Activated B cell treated with CpG ODN at 0.5 μM for 24 hours (primary cell): ENCODE measurements at regions of chr3 and their contacts with region 1.

Region 1: GRCh38 chr3:101573449-101574387 is at the start of gene PCNP:
- DNase-seq: peak; percentile 97
- ATAC-seq: peak; percentile 85
- H3K4me3 Mint-ChIP-seq: peak within 1 kb of the TSS; percentile 99
- H3K27ac Mint-ChIP-seq: peak within 1 kb of the TSS; percentile 96
- H3K4me1 Mint-ChIP-seq: peaks cover 45% of the 10 kb centered on the region
- H3K27me3 Mint-ChIP-seq: no peaks in the 10 kb centered on the region
- CTCF ChIP-seq: no peak
- total RNA-seq, gene PCNP: 149 TPM in 2 replicates

Region 2: DNA sequence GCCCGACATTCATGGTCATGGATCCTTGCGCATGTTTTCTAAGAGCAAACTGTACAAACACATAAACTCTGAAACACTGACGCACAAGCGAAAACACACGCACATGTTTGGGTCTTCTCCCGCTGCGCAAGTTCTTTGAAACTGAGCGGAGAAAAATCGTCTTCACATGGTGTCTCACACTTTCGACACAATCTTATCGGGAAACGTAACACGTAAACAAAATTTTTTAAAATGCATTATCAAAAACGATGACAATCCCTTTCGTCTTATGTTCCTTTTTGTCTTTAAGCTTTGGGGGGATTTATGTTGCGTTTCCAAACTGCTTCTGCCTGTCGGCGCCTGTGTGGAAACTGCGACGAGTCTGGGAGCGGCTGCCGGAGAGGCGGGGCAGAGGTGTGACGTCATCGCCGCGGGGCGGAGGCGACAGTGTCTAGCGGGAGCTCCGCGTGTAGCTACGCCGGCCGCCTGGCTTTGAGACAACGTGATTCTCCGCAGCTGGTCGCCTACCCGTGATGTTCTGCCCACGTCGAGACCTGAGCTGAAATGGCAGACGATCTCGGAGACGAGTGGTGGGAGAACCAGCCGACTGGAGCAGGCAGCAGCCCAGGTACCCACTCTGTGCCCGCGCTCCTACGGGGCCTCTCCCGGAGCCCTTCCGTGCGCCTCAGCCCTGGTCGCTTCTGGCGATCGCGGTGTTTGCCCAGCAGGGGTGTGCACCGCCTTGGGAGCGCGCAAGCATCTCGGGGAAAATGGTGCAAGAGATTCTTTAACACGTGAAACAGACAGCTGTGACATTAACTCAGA is 1756.1 kb before region 1 on chr3 and contains the start of gene CMSS1:
- CTCF ChIA-PET with region 1: no interaction called
- POLR2A ChIA-PET with region 1: interaction called, 4 read pairs
- intact Hi-C with region 1: loop called (anchors 10 kb)
- DNase-seq: peak; percentile 96
- ATAC-seq: peak; percentile 94
- H3K4me3 Mint-ChIP-seq: peak within 1 kb of the TSS; percentile 97
- H3K27ac Mint-ChIP-seq: peak within 1 kb of the TSS; percentile 99
- H3K4me1 Mint-ChIP-seq: peaks cover 37% of the 10 kb centered on the region
- H3K27me3 Mint-ChIP-seq: no peaks in the 10 kb centered on the region
- CTCF ChIP-seq: no peak
- total RNA-seq, gene CMSS1: 37.4 and 41.1 TPM in 2 replicates

Region 3: GRCh38 chr3:100334488-100335351 is 1239.0 kb before region 1 on chr3 and contains the start of gene NIT2:
- CTCF ChIA-PET with region 1: no interaction called
- POLR2A ChIA-PET with region 1: no interaction called
- intact Hi-C with region 1: loop called (anchors 1 kb)
- DNase-seq: peak; percentile 72
- ATAC-seq: peak; percentile 96
- H3K4me3 Mint-ChIP-seq: peak within 1 kb of the TSS; percentile 91
- H3K27ac Mint-ChIP-seq: peak within 1 kb of the TSS; percentile 92
- H3K4me1 Mint-ChIP-seq: peaks cover 19% of the 10 kb centered on the region
- H3K27me3 Mint-ChIP-seq: no peaks in the 10 kb centered on the region
- CTCF ChIP-seq: no peak
- total RNA-seq, gene NIT2: 52.0 and 55.6 TPM in 2 replicates

Region 4: DNA sequence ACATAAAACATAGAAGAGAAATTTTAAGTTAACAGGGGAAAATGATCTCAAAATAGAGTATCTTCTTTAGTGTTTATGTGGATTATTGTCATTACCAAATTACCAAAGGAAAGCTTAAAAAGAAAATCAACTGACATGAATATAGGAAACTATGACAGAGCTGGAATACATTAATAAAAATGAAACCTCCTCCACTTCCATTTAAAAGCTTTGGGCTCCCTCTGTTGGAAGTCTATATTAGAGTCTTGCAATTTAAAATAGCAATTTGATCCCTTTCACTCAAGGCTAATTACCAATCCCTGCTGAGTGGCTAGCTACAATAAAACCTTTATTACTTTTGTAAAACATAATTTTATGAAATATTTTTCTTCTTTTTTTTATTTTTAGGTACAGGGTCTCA is 191.9 kb before region 1 on chr3:
- CTCF ChIA-PET with region 1: no interaction called
- POLR2A ChIA-PET with region 1: no interaction called
- intact Hi-C with region 1: loop called (anchors 1 kb)
- DNase-seq: no peak
- ATAC-seq: peak; percentile 34
- H3K4me3 Mint-ChIP-seq: no peak overlapping the region
- H3K27ac Mint-ChIP-seq: no peak overlapping the region
- H3K4me1 Mint-ChIP-seq: peaks cover 43% of the 10 kb centered on the region
- H3K27me3 Mint-ChIP-seq: no peaks in the 10 kb centered on the region
- CTCF ChIP-seq: no peak

Region 5: DNA sequence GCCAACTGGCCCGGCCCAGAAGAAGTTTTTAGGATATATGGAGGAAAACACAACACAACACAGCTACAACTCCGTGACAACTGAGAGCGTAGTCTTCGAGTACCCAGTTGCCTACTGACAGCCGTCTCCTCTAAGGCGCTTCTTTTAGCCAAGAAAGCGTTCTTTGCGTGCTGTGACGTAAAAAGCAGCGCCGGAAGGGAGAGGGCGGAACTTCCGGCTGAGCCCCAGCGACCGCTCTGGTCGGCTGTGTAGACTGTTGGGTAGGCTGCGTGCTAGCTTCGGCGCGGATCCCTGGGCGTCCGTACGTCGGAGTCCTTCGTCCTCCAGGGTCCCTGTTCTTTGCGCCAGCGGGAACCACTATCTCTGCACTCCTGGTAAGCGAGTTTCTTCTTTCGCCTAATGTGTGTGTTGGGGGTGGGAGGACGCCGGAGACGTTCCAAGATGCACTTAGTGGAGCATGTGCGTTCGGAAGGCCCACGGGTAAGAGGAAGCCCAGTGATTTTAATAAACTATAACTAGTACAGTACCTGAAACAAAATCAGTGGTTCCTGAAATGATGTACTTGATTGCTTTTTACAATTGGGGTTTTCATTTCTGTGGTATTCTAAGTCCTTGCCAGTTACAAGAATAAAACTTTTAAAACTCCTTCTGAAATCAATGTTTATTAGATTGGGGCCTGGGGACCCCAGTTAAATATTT is 11.9 kb before region 1 on chr3 and contains the start of gene TRMT10C:
- CTCF ChIA-PET with region 1: interaction called, 10 read pairs
- POLR2A ChIA-PET with region 1: interaction called, 94 read pairs
- intact Hi-C with region 1: loop called (anchors 1 kb)
- DNase-seq: peak; percentile 88
- ATAC-seq: peak; percentile 96
- H3K4me3 Mint-ChIP-seq: peak within 1 kb of the TSS; percentile 99
- H3K27ac Mint-ChIP-seq: peak within 1 kb of the TSS; percentile 95
- H3K4me1 Mint-ChIP-seq: peaks cover 42% of the 10 kb centered on the region
- H3K27me3 Mint-ChIP-seq: peaks cover 4% of the 10 kb centered on the region
- CTCF ChIP-seq: no peak
- total RNA-seq, gene TRMT10C: 33.5 and 34.6 TPM in 2 replicates

Region 6: DNA sequence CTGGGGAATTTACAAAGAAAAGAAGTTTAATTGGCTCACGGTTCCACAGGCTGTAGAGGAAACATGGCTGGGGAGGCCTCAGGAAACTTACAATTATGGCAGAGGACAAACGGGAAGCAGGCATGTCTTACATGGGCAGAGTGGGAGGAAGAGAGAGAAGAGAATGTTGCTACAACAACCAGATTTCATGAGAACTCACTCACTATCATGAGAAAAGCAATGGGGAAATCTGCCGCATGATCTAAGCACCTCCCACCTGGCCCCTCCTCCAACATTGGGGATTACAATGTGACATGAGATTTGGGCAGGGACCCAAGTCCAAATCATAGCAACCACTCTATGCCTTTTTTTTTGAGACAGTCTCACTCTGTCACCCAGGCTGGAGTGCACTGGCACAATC is 29.0 kb after region 1 on chr3:
- CTCF ChIA-PET with region 1: no interaction called
- POLR2A ChIA-PET with region 1: no interaction called
- intact Hi-C with region 1: no loop called
- DNase-seq: no peak
- ATAC-seq: no peak
- H3K4me3 Mint-ChIP-seq: no peak overlapping the region
- H3K27ac Mint-ChIP-seq: no peak overlapping the region
- H3K4me1 Mint-ChIP-seq: no peaks in the 10 kb centered on the region
- H3K27me3 Mint-ChIP-seq: no peaks in the 10 kb centered on the region
- CTCF ChIP-seq: no peak

Region 7: GRCh38 chr3:101676765-101677435 is 103.2 kb after region 1 on chr3 and contains the start of gene ZBTB11:
- CTCF ChIA-PET with region 1: interaction called, 4 read pairs
- POLR2A ChIA-PET with region 1: interaction called, 52 read pairs
- intact Hi-C with region 1: loop called (anchors 1 kb)
- DNase-seq: peak; percentile 99
- ATAC-seq: peak; percentile 68
- H3K4me3 Mint-ChIP-seq: peak within 1 kb of the TSS; percentile 93
- H3K27ac Mint-ChIP-seq: peak within 1 kb of the TSS; percentile 96
- H3K4me1 Mint-ChIP-seq: peaks cover 56% of the 10 kb centered on the region
- H3K27me3 Mint-ChIP-seq: no peaks in the 10 kb centered on the region
- CTCF ChIP-seq: no peak
- total RNA-seq, gene ZBTB11: 26.2 and 28.7 TPM in 2 replicates

Region 8: DNA sequence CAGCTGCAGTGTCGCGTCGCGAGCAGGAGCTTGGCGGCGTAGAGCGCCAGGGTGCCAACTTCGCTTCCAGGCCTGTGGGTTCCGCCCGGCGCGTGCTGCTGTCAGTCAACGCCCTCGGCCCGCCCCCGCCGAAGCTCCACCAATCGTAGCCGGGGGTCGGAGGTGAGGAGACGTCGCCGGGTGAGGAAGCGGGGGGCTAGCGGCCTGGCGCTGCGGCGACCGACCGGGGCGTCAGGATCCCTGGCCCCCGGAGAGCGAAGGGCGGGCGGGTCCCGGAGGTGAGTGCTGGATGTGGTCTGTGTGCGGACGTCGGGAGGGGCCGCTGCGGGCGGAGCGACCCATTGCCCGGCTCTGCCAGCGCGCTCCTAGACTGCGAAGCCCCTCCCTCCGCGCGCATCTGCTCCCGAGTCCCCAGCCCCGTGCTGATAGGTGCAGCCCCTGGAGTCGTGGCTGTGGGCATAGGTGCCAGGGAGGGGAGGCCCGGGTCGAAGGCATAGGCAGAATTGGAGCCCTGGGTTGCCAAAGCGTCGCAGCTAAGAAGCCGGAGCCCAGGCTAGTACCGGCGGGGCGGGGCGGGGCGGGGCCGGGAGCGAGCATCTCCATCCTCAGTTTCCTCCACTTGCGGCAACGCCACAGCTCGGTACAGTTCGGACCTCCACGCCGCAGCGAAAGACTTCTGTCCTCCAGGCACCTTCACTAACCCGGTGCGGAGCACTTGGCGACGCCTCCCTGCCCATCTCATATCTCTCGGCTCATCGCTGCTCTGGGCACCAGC is 205.5 kb after region 1 on chr3 and contains the start of gene NXPE3:
- CTCF ChIA-PET with region 1: no interaction called
- POLR2A ChIA-PET with region 1: interaction called, 5 read pairs
- intact Hi-C with region 1: loop called (anchors 1 kb)
- DNase-seq: peak; percentile 94
- ATAC-seq: peak; percentile 92
- H3K4me3 Mint-ChIP-seq: peak within 1 kb of the TSS; percentile 87
- H3K27ac Mint-ChIP-seq: peak within 1 kb of the TSS; percentile 94
- H3K4me1 Mint-ChIP-seq: peaks cover 31% of the 10 kb centered on the region
- H3K27me3 Mint-ChIP-seq: no peaks in the 10 kb centered on the region
- CTCF ChIP-seq: no peak
- total RNA-seq, gene NXPE3: 15.8 and 16.0 TPM in 2 replicates